Activated CD4-positive, alpha-beta T cell treated with anti-CD3 and anti-CD28 coated beads for 36 hours (primary cell): ENCODE measurements at regions of chr12 and their contacts with region 1.

Region 1: GRCh38 chr12:114668151-114668885 is 15.7 kb downstream of the TBX3 start:
- DNase-seq: peak; percentile 67
- ATAC-seq: peak; percentile 61
- H3K4me3 Mint-ChIP-seq: no peak overlapping the region
- H3K27ac Mint-ChIP-seq: no peak overlapping the region
- H3K4me1 Mint-ChIP-seq: no peaks in the 10 kb centered on the region
- H3K27me3 Mint-ChIP-seq: peaks cover 64% of the 10 kb centered on the region

Region 2: GRCh38 chr12:113462117-113462774 is 1206.1 kb before region 1 on chr12:
- CTCF ChIA-PET with region 1: no interaction called
- POLR2A ChIA-PET with region 1: no interaction called
- intact Hi-C with region 1: loop called in 1 of 2 experiments (anchors 10 kb)
- DNase-seq: peak; percentile 89
- ATAC-seq: peak; percentile 71
- H3K4me3 Mint-ChIP-seq: peak overlapping the region; percentile 64
- H3K27ac Mint-ChIP-seq: no peak overlapping the region
- H3K4me1 Mint-ChIP-seq: peaks cover 19% of the 10 kb centered on the region
- H3K27me3 Mint-ChIP-seq: peaks cover 59% of the 10 kb centered on the region

Region 3: GRCh38 chr12:114447274-114447716 is 221.0 kb before region 1 on chr12:
- CTCF ChIA-PET with region 1: no interaction called
- POLR2A ChIA-PET with region 1: no interaction called
- intact Hi-C with region 1: loop called (anchors 2 to 5 kb)
- DNase-seq: peak; percentile 3
- ATAC-seq: no peak
- H3K4me3 Mint-ChIP-seq: no peak overlapping the region
- H3K27ac Mint-ChIP-seq: no peak overlapping the region
- H3K4me1 Mint-ChIP-seq: no peaks in the 10 kb centered on the region
- H3K27me3 Mint-ChIP-seq: peaks cover 76% of the 10 kb centered on the region

Region 4: DNA sequence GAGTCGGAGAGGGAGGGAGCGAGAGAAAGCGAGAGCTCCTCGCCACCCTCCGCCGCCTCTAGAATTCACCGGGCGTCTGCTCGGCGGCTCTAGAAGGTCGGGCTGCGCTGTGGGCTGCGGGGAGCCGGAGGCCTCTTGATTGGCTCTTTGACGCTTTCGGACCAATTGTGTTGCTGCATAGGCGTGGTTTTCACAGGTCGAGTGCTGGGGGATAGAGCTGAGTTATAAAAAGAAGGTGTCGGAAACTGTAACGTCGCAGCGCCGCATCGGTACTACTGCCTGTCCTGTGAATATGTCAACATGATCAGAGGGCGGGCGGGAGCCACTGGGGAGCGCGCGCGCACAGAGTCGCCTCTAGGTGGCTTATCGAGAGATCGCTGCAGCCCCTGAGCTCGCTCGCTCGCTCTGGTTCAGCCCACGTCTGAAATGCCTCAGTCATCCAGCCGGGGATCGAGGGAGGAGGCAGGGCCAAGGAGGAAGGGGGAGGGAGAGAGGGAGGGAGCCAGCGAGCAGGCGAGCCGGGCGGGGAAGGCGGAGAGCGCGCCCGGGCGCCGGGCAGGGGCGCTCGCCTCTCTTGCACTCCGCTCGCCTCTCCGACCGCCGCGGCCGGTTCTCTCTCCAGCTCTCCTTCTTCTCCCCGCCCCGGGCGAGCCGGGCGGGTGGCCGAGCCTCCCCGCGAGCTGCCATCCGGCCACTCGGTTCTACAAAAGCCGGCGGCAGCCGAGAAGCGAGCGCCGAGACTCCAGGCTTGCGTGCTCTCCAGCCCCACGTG is 16.0 kb after region 1 on chr12 and contains the start of gene TBX3:
- CTCF ChIA-PET with region 1: interaction called, 5 read pairs
- POLR2A ChIA-PET with region 1: no interaction called
- intact Hi-C with region 1: loop called (anchors 2 kb)
- DNase-seq: peak; percentile 86
- ATAC-seq: peak; percentile 94
- H3K4me3 Mint-ChIP-seq: peak within 1 kb of the TSS; percentile 71
- H3K27ac Mint-ChIP-seq: peak within 1 kb of the TSS; percentile 33
- H3K4me1 Mint-ChIP-seq: peaks cover 38% of the 10 kb centered on the region
- H3K27me3 Mint-ChIP-seq: peaks cover 90% of the 10 kb centered on the region
- total RNA-seq, gene TBX3: not detected

Region 5: DNA sequence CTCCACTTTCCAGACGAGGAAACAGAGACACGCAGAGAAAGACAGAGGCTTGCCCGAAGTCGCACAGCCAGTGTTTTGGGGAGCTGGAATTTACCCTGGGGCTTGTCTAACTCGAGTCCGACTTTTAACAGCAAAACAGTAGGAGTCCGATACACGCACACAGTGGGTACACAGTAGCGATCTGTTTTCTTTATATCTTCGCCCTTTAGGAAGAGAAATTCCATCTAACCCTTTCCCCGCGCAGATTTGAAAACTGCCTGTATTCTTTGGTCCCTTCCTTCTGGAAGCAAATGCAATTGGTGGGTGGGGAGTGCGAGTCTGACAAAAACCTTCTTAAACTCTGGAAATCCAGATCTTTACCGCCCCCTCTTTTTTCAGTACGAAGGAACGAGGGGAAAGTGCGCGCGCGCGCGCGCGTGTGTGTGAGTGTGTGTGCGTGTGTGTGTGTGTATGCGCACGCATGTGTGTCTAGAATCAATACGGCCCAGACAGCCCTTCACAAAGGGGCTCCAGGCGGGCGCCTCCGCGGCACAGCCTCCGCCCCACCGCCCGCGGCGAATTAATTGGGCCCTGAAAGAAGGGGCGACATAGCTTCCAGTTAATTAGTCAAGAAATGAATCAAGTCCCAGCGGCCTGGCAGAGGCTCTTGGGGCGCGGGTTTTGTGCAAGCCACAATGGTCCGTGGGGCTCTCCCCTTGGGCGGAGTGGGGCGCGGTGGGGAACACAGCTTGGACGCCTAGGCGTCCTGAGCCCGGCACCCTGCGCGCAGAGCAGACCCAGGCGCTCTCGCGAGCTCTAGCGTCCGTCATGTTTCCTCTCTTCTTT is 29.6 kb after region 1 on chr12:
- CTCF ChIA-PET with region 1: no interaction called
- POLR2A ChIA-PET with region 1: no interaction called
- intact Hi-C with region 1: loop called in 1 of 2 experiments (anchors 2 kb)
- DNase-seq: no peak
- ATAC-seq: no peak
- H3K4me3 Mint-ChIP-seq: no peak overlapping the region
- H3K27ac Mint-ChIP-seq: no peak overlapping the region
- H3K4me1 Mint-ChIP-seq: no peaks in the 10 kb centered on the region
- H3K27me3 Mint-ChIP-seq: peaks cover 88% of the 10 kb centered on the region